Ascending aorta (tissue), 2 donors: ENCODE measurements at regions of chr10 and their contacts with region 1.

Region 1: GRCh38 chr10:77641788-77642397 is 4.3 kb upstream of the KCNMA1 start:
- DNase-seq: peak in 1 of 2 donors; percentile 88
- H3K4me3 ChIP-seq: no peak overlapping the region
- H3K27ac ChIP-seq: peak overlapping the region; percentile 79
- H3K4me1 ChIP-seq: peaks cover 9 to 29% of the 10 kb centered on the region in 2 donors
- H3K27me3 ChIP-seq: no peaks in the 10 kb centered on the region
- CTCF ChIP-seq: peak; percentile 77 to 86 (median 85)

Region 2: GRCh38 chr10:77165445-77166208 is 476.3 kb before region 1 on chr10:
- intact Hi-C with region 1: loop called (anchors 1 kb)
- DNase-seq: peak in 1 of 2 donors; percentile 74
- H3K4me3 ChIP-seq: peak overlapping the region in 1 of 2 donors; percentile 41
- H3K27ac ChIP-seq: peak overlapping the region; percentile 64 to 72
- H3K4me1 ChIP-seq: peaks cover 0 to 28% of the 10 kb centered on the region in 2 donors
- H3K27me3 ChIP-seq: no peaks in the 10 kb centered on the region
- CTCF ChIP-seq: peak; percentile 68 to 83 (median 77)

Region 3: DNA sequence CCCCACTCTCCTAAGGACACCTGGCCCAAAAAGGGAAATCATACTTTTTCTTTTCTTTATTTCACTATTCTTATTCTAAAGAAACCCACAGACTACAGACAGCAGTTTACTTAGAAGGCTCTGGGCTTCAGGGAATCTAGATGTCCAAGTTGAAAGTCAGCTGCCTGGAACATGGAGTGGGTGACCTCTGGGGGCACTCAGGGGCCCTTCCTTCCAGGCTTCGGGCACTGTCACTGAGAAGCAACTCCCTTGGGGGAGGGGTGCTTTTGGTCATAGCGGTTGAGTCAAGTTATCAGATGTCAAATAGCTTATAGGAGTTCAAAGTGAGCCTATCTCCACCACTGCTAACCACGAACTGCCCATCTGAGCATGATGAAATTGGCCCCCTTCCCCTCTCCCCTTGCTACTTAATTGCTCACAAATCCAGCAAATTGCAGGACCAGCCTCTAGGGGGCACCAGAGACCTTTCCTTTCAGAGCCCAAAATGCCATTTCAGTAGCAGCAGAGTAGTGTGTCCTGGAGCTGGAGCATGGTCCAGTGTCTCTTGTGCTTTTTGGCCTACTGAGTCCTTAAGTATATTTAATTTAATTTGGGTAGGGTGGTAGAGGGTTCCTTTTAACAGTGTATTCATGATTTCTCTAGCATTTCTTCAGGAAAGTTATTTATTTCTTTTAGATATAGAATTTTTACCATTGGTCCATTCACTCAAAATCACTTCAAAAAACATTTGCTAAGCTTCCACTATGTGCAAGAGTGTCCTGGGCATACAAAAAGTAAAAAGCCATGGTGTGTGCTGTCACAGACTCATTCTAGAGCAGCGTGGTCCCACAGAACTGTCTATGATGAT is 468.1 kb before region 1 on chr10:
- intact Hi-C with region 1: loop called (anchors 2 kb)
- DNase-seq: peak in 1 of 2 donors; percentile 88
- H3K4me3 ChIP-seq: no peak overlapping the region
- H3K27ac ChIP-seq: peak overlapping the region in 1 of 2 donors; percentile 13
- H3K4me1 ChIP-seq: peaks cover 2 to 3% of the 10 kb centered on the region in 2 donors
- H3K27me3 ChIP-seq: no peaks in the 10 kb centered on the region
- CTCF ChIP-seq: peak; percentile 88 to 91 (median 90)

Region 4: GRCh38 chr10:77247031-77247990 is 394.6 kb before region 1 on chr10:
- intact Hi-C with region 1: loop called (anchors 5 kb)
- DNase-seq: peak in 1 of 2 donors; percentile 70
- H3K4me3 ChIP-seq: peak overlapping the region in 1 of 2 donors; percentile 23
- H3K27ac ChIP-seq: peak overlapping the region; percentile 74 to 79
- H3K4me1 ChIP-seq: peaks cover 20 to 54% of the 10 kb centered on the region in 2 donors
- H3K27me3 ChIP-seq: no peaks in the 10 kb centered on the region
- CTCF ChIP-seq: no peak

Region 5: GRCh38 chr10:77513781-77514331 is 128.0 kb before region 1 on chr10:
- intact Hi-C with region 1: loop called (anchors 5 kb)
- DNase-seq: peak; percentile 70 to 94
- H3K4me3 ChIP-seq: no peak overlapping the region
- H3K27ac ChIP-seq: peak overlapping the region; percentile 82 to 86
- H3K4me1 ChIP-seq: peaks cover 6 to 36% of the 10 kb centered on the region in 2 donors
- H3K27me3 ChIP-seq: no peaks in the 10 kb centered on the region
- CTCF ChIP-seq: no peak

Region 6: GRCh38 chr10:77555591-77556212 is 86.2 kb before region 1 on chr10:
- intact Hi-C with region 1: loop called (anchors 5 kb)
- DNase-seq: no peak
- H3K4me3 ChIP-seq: no peak overlapping the region
- H3K27ac ChIP-seq: peak overlapping the region; percentile 87 to 93
- H3K4me1 ChIP-seq: peaks cover 24 to 73% of the 10 kb centered on the region in 2 donors
- H3K27me3 ChIP-seq: no peaks in the 10 kb centered on the region
- CTCF ChIP-seq: no peak

Region 7: GRCh38 chr10:77563638-77564270 is 78.1 kb before region 1 on chr10:
- intact Hi-C with region 1: loop called (anchors 2 kb)
- DNase-seq: no peak
- H3K4me3 ChIP-seq: no peak overlapping the region
- H3K27ac ChIP-seq: peak overlapping the region; percentile 79 to 83
- H3K4me1 ChIP-seq: peaks cover 18 to 66% of the 10 kb centered on the region in 2 donors
- H3K27me3 ChIP-seq: no peaks in the 10 kb centered on the region
- CTCF ChIP-seq: no peak

Region 8: DNA sequence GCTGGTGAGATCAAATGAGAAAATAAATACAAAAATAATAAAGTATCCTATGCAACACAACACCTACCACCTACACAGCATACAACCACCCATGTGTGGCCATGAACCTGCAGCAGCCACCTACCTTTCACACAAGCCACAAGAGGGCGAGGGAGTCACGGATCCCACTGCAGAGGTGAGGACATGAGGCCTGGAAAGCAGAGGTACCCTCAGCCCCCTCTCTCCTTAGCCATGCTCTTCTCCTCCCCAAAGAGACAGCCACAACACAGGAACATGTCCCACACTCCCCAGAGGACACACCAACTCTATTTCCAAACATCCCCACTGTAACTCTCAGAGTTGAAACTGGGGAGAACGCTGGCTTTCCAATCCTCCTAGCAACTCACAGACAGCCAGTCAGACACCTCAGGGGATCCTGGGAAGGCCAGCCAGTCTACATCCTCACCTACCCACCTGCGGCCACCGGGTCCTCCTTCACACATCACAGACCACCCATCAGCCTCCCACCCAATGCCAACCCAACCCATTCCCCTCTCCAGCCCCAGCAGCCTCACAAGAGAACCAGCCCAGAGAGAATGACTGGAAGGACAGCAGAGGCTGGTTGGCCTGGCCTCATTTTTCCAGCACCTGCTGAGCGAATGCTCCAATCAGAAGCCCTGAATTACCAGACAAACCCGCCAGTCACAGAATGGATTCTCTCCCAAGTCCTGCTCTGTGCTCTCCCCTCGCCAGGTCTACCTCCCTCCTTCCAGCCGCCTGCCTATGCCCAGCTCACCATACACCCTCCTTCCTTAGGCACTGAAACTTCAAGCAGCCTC is 266.2 kb after region 1 on chr10:
- intact Hi-C with region 1: no loop called
- DNase-seq: no peak
- H3K4me3 ChIP-seq: no peak overlapping the region
- H3K27ac ChIP-seq: no peak overlapping the region
- H3K4me1 ChIP-seq: peaks cover 0 to 5% of the 10 kb centered on the region in 2 donors
- H3K27me3 ChIP-seq: no peaks in the 10 kb centered on the region
- CTCF ChIP-seq: no peak

Region 9: DNA sequence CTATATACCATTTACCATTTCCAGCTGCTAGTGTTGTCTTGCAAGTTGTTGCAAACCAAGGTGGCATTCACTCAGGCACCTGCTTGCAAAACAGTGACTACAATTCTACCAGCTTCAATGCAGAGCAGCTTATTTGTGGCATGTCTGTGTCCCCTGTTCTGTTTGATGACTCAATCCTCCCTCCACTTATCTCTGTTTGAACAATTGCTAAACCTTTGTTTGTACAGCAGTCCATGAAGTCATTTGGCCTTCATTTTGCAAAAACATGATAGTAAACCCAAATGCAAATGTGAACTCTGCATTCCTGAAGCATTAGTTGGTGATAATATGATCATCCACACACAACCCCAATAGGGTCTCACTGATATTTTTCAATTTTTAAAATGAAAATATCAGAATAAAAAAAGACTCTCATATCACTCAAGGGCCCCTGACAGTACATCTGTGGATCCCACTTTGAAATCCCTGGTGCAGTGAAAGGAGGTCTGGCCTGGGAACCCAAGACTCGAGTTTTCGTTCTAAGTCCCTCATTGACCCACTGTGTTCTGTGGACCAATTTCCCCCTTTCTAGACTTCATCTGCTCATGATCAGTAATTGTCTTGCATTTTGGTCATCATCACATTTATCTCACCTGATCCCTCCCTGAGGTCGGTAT is 817.2 kb after region 1 on chr10:
- intact Hi-C with region 1: no loop called
- DNase-seq: no peak
- H3K4me3 ChIP-seq: no peak overlapping the region
- H3K27ac ChIP-seq: no peak overlapping the region
- H3K4me1 ChIP-seq: no peaks in the 10 kb centered on the region
- H3K27me3 ChIP-seq: no peaks in the 10 kb centered on the region
- CTCF ChIP-seq: no peak